CD8-positive, alpha-beta T cell (primary cell): ENCODE measurements at regions of chr7 and their contacts with region 1.

Region 1: DNA sequence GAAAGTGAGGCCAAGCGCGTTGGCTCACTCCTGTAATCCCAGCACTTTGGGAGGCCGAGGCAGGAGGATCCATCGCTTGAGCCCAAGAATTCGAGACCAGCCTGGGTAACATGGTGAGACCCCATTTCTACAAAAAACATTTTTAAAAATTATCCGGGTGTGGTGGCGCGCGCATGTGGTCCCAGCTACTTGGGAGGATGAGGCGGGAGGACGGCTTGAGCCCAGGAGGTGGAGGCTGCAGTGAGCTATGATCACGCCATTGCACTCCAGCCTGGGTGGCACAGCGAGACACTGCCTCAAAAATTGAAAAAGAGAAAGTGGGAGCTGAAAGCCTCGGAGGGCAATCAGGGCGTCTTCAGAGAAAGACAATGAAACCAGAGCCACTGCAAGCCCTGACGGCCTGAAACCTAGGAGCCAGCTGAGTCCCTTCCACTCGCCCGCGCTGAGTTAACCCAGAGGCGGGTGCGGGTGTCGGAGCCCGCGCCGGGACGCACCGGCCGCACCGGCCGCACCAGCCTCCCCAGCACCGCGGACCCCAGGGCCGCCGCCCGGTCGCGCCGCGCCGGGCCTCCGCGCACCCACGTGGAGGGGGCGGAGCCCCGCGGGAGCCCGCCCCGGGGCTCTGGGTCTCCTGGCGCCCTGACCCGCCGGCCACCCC is 22.4 kb downstream of the ZFAND2A start:
- DNase-seq: no peak
- ATAC-seq: peak; percentile 62
- H3K4me3 ChIP-seq: peak overlapping the region; percentile 77 to 78
- H3K4me3 Mint-ChIP-seq: peak overlapping the region; percentile 90
- H3K27ac ChIP-seq: peak overlapping the region; percentile 81 to 91
- H3K27ac Mint-ChIP-seq: peak overlapping the region; percentile 88
- H3K4me1 ChIP-seq: peaks cover 14% of the 10 kb centered on the region
- H3K4me1 Mint-ChIP-seq: peaks cover 17% of the 10 kb centered on the region
- H3K27me3 ChIP-seq: no peaks in the 10 kb centered on the region
- H3K27me3 Mint-ChIP-seq: no peaks in the 10 kb centered on the region
- CTCF ChIP-seq: no peak

Region 2: GRCh38 chr7:816300-816750 is 321.3 kb before region 1 on chr7:
- CTCF ChIA-PET with region 1: no interaction called
- POLR2A ChIA-PET with region 1: no interaction called
- intact Hi-C with region 1: loop called in 1 of 2 experiments (anchors 5 kb)
- DNase-seq: peak; percentile 93 to 98 (median 96)
- ATAC-seq: peak; percentile 94
- H3K4me3 ChIP-seq: peak overlapping the region; percentile 40 to 53
- H3K4me3 Mint-ChIP-seq: peak overlapping the region; percentile 61
- H3K27ac ChIP-seq: no peak overlapping the region
- H3K27ac Mint-ChIP-seq: no peak overlapping the region
- H3K4me1 ChIP-seq: peaks cover 34% of the 10 kb centered on the region
- H3K4me1 Mint-ChIP-seq: peaks cover 54% of the 10 kb centered on the region
- H3K27me3 ChIP-seq: no peaks in the 10 kb centered on the region
- H3K27me3 Mint-ChIP-seq: peaks cover 2% of the 10 kb centered on the region
- CTCF ChIP-seq: no peak

Region 3: GRCh38 chr7:1044191-1045068 is 93.2 kb before region 1 on chr7 and contains the start of gene GPR146:
- CTCF ChIA-PET with region 1: no interaction called
- POLR2A ChIA-PET with region 1: no interaction called
- intact Hi-C with region 1: loop called (anchors 2 to 5 kb)
- DNase-seq: peak; percentile 76 to 97 (median 91)
- ATAC-seq: peak; percentile 88
- H3K4me3 ChIP-seq: peak within 1 kb of the TSS; percentile 57 to 71
- H3K4me3 Mint-ChIP-seq: peak within 1 kb of the TSS; percentile 84
- H3K27ac ChIP-seq: peak within 1 kb of the TSS; percentile 51 to 57
- H3K27ac Mint-ChIP-seq: peak within 1 kb of the TSS; percentile 52
- H3K4me1 ChIP-seq: peaks cover 53% of the 10 kb centered on the region
- H3K4me1 Mint-ChIP-seq: peaks cover 63% of the 10 kb centered on the region
- H3K27me3 ChIP-seq: no peaks in the 10 kb centered on the region
- H3K27me3 Mint-ChIP-seq: no peaks in the 10 kb centered on the region
- CTCF ChIP-seq: peak; percentile 60
- total RNA-seq, gene GPR146: 4.4 to 5.0 TPM

Region 4: GRCh38 chr7:1159891-1160668 is 22.4 kb after region 1 on chr7 and contains the start of gene ZFAND2A:
- CTCF ChIA-PET with region 1: interaction called, 4 read pairs
- POLR2A ChIA-PET with region 1: interaction called, 24 read pairs
- intact Hi-C with region 1: loop called (anchors 1 kb)
- DNase-seq: peak; percentile 97 to 99 (median 99)
- ATAC-seq: peak; percentile 98
- H3K4me3 ChIP-seq: peak within 1 kb of the TSS; percentile 98
- H3K4me3 Mint-ChIP-seq: peak within 1 kb of the TSS; percentile 90
- H3K27ac ChIP-seq: peak within 1 kb of the TSS; percentile 96 to 99
- H3K27ac Mint-ChIP-seq: peak within 1 kb of the TSS; percentile 95
- H3K4me1 ChIP-seq: peaks cover 22% of the 10 kb centered on the region
- H3K4me1 Mint-ChIP-seq: peaks cover 27% of the 10 kb centered on the region
- H3K27me3 ChIP-seq: no peaks in the 10 kb centered on the region
- H3K27me3 Mint-ChIP-seq: no peaks in the 10 kb centered on the region
- CTCF ChIP-seq: no peak
- total RNA-seq, gene ZFAND2A: 100 to 105 TPM

Region 5: GRCh38 chr7:1459522-1459892 is 321.9 kb after region 1 on chr7:
- CTCF ChIA-PET with region 1: no interaction called
- POLR2A ChIA-PET with region 1: no interaction called
- intact Hi-C with region 1: loop called in 1 of 2 experiments (anchors 1 kb)
- DNase-seq: peak; percentile 90 to 98 (median 97)
- ATAC-seq: peak; percentile 95
- H3K4me3 ChIP-seq: peak overlapping the region; percentile 65 to 90
- H3K4me3 Mint-ChIP-seq: peak overlapping the region; percentile 77
- H3K27ac ChIP-seq: no peak overlapping the region
- H3K27ac Mint-ChIP-seq: no peak overlapping the region
- H3K4me1 ChIP-seq: peaks cover 24% of the 10 kb centered on the region
- H3K4me1 Mint-ChIP-seq: peaks cover 17% of the 10 kb centered on the region
- H3K27me3 ChIP-seq: no peaks in the 10 kb centered on the region
- H3K27me3 Mint-ChIP-seq: no peaks in the 10 kb centered on the region
- CTCF ChIP-seq: no peak

Region 6: GRCh38 chr7:1693991-1694524 is 556.4 kb after region 1 on chr7:
- CTCF ChIA-PET with region 1: no interaction called
- POLR2A ChIA-PET with region 1: no interaction called
- intact Hi-C with region 1: no loop called
- DNase-seq: peak in 1 of 9 experiments; percentile 2
- ATAC-seq: no peak
- H3K4me3 ChIP-seq: no peak overlapping the region
- H3K4me3 Mint-ChIP-seq: no peak overlapping the region
- H3K27ac ChIP-seq: no peak overlapping the region
- H3K27ac Mint-ChIP-seq: no peak overlapping the region
- H3K4me1 ChIP-seq: no peaks in the 10 kb centered on the region
- H3K4me1 Mint-ChIP-seq: peaks cover 2% of the 10 kb centered on the region
- H3K27me3 ChIP-seq: peaks cover 0 to 7% of the 10 kb centered on the region in 2 experiments
- H3K27me3 Mint-ChIP-seq: peaks cover 15% of the 10 kb centered on the region
- CTCF ChIP-seq: no peak